ENCODE measurements at regions of chr7 and their contacts with region 1.

Region 1: DNA sequence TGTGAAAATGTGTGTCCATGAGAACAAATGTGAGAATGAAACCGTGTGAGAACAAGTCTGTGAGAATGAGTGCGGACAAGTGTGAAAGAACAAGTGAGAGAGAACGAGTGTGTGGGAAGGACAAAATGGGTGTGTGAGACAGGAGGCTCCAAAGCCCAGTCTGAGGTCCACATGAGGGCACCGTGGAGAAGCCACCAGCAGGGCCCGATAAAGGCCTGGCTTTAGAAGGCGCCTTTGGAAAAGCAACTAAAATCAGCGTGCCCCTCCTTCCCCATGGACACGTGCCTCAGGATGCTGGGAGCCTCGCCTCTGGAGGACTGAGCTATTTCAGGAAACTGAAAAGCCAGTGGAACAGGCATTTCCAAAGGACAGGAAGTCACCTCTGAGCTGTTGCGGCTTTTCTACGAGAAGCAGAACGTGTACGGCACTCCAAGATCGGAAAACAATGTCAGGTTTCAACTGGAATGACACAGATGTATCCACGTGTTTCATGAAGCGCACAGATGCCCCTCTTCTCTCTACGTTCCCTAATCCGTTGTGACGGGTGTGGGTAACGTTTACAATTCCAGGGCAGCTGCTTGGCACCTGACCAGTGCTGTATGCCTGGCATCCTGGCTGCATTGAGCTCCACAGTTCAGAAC is 46.4 kb downstream of the ESYT2 start:
- DNase-seq: peak; percentile 64 to 86
- H3K4me3 ChIP-seq: no peak overlapping the region
- H3K27ac ChIP-seq: peak overlapping the region; percentile 36
- H3K4me1 ChIP-seq: peaks cover 12% of the 10 kb centered on the region
- H3K27me3 ChIP-seq: no peaks in the 10 kb centered on the region
- CTCF ChIP-seq: peak; percentile 58

Region 2: DNA sequence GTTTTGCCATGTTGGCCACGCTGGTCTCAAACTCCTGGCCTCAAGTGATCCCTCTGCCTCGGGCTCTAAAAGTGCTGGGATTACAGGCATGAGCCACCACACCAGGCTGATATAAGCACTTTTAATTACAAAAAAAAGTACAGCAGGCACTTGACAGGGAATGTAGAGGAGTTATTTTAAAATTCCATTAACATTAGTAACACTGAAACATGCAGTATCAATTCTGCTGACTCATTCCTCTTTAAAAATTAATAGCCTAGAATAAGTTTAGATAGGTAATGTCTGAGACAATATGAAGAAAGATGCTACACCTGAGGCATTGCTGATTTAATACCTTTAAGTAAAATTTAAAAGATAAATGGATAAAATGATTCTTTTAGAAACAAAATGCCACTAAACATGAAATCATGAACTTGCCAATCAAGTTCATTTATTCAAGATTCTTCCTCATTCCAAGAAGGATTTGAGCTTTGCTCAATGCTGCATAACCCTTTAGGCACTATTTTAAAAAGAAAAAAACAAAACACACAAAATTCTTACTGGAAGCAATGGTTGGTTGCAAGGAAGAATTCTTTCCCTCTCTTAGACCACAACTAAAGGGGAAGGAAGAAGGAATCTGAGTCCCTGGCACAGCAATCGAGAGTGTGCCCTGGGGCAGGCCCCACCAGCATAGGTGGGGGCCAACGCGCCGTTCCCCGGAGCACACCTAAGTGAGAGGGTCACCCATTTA is 19.8 kb after region 1 on chr7:
- CTCF ChIA-PET with region 1: no interaction called
- POLR2A ChIA-PET with region 1: no interaction called
- intact Hi-C with region 1: loop called (anchors 1 kb)
- DNase-seq: peak; percentile 78 to 99
- H3K4me3 ChIP-seq: peak overlapping the region; percentile 35
- H3K27ac ChIP-seq: peak overlapping the region; percentile 97
- H3K4me1 ChIP-seq: peaks cover 59% of the 10 kb centered on the region
- H3K27me3 ChIP-seq: no peaks in the 10 kb centered on the region
- CTCF ChIP-seq: no peak

Region 3: DNA sequence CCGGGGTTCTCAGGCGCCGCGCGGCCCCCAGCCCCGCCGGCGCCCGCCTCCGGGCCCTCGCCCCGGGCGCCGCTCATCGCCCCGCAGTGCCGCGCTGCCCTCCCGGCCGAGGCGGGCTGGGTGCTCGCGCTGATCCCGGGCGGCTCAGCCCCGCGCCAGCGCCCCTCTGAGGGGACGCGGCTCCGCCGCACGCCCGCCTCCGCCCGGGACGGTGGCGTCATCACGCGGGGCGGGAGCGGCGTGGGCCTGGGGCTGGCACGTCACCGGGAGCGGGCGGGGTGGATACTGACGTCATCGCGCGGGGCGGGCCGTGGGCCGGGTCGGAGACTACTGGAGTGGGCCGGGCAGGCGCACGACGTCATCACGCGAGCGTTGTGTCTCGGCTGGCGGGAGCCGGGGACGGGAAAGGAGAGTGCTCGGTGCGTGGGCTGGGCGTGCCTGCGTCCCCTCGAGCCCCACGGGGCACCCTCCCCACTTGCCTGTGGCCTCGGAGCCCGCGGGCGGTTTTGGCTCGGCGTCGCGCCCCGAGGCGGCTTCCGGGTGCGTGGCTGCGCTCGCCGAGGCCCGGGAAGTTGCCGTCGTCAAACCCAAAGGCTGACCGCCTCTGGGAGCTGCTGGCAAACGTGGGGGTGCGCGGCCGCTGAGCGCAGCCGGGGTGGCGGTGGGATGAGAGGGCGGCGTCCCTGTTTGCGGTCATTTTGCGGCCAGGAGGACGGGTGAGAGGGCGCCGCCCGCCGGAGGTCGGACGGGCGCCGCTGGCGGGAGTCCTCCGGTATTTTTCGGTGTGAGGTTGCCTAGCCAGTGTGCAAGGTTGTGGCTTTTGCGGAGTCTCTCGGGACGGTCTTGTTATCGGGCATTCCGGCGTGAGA is 46.7 kb after region 1 on chr7 and contains the start of gene ESYT2:
- CTCF ChIA-PET with region 1: interaction called, 9 read pairs
- POLR2A ChIA-PET with region 1: interaction called, 4 read pairs
- intact Hi-C with region 1: loop called (anchors 1 kb)
- DNase-seq: peak; percentile 90 to 99
- H3K4me3 ChIP-seq: peak within 1 kb of the TSS; percentile 84
- H3K27ac ChIP-seq: peak within 1 kb of the TSS; percentile 89
- H3K4me1 ChIP-seq: peaks cover 34% of the 10 kb centered on the region
- H3K27me3 ChIP-seq: no peaks in the 10 kb centered on the region
- CTCF ChIP-seq: peak; percentile 12; the same call in 1 of the 2 replicates
- total RNA-seq, gene ESYT2: 124 and 162 TPM in 2 replicates

Region 4: DNA sequence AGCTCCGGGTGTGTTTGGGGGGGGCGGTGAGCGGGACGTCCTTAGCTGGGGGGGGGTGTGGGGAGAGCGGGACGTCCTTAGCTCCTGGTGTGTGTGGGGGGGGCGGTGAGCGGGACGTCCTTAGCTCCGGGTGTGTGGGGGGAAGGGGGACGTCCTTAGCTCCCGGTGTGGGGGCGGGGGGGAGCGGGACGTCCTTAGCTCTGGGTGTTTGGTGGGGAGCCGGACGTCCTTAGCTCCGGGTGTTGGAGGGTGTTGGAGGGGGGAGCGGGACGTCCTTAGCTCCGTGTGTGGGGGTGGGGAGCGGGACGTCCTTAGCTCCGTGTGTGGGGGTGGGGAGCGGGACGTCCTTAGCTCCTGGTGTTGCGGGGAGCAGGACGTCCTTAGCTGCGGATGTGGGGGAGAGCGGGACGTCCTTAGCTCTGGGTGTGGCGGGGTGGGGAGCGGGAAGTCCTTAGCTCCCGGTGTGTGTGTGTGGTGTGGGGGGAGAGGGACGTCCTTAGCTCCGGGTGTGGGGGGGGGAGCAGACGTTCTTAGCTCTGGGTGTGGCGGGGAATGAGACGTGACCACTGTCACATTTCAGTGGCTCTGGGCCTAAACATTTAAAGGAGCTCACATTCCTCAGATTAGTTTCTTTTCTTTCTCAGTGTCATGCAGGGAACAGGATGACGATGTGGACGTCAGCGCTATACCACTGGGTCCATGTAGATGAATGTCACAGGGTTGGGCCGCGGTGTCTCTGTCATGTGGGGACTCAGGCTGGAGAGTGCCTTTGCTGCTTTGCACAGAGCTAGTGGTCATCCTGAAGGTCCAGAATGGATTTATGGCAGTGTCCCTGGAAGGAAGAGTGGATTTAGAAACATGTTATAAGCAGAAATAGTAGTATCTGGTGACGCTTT is 81.0 kb after region 1 on chr7:
- CTCF ChIA-PET with region 1: interaction called, 16 read pairs
- POLR2A ChIA-PET with region 1: interaction called, 63 read pairs
- intact Hi-C with region 1: loop called (anchors 1 kb)
- DNase-seq: peak; percentile 68 to 71
- H3K4me3 ChIP-seq: peak overlapping the region; percentile 51; the same call in 1 of the 2 replicates
- H3K27ac ChIP-seq: peak overlapping the region; percentile 62
- H3K4me1 ChIP-seq: peaks cover 25% of the 10 kb centered on the region
- H3K27me3 ChIP-seq: no peaks in the 10 kb centered on the region
- CTCF ChIP-seq: no peak

Region 5: GRCh38 chr7:158976849-158977593 is 194.1 kb after region 1 on chr7:
- CTCF ChIA-PET with region 1: interaction called, 19 read pairs
- POLR2A ChIA-PET with region 1: no interaction called
- intact Hi-C with region 1: loop called (anchors 1 kb)
- DNase-seq: peak; percentile 71 to 85
- H3K4me3 ChIP-seq: peak overlapping the region; percentile 51
- H3K27ac ChIP-seq: no peak overlapping the region
- H3K4me1 ChIP-seq: no peaks in the 10 kb centered on the region
- H3K27me3 ChIP-seq: peaks cover 29% of the 10 kb centered on the region
- CTCF ChIP-seq: peak; percentile 100

Region 6: DNA sequence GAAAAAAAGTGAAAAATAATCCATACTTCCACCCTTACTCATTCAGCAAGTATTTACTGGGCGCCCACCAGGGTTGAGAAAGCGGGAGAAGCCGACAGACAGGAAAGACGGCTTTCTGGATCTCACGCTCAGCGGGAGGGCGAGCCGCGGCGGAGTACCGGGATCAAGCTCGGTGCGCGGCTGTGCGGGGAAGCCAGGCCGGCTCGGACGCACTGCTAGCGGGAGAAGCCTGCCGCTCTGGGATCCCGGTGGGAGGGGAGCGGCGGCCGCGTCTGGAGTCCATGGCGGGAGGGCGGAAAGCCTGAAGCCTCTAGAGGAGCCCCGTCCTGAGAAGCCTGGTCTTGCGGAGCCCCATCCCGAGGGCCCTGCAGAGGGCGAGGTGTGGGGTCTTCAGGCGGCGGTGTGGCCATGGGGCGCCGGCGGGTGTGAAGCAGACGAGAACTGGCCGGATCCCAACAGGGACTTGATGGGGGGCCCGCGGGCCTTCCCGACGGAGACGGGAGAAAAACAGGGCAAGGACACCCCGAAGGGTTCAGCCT is 278.9 kb after region 1 on chr7:
- CTCF ChIA-PET with region 1: no interaction called
- POLR2A ChIA-PET with region 1: no interaction called
- intact Hi-C with region 1: no loop called
- DNase-seq: no peak
- H3K4me3 ChIP-seq: no peak overlapping the region
- H3K27ac ChIP-seq: no peak overlapping the region
- H3K4me1 ChIP-seq: no peaks in the 10 kb centered on the region
- H3K27me3 ChIP-seq: peaks cover 71% of the 10 kb centered on the region
- CTCF ChIP-seq: no peak